Caco-2 (cell line): ENCODE measurements at regions of chr6 and their contacts with region 1.

Region 1: DNA sequence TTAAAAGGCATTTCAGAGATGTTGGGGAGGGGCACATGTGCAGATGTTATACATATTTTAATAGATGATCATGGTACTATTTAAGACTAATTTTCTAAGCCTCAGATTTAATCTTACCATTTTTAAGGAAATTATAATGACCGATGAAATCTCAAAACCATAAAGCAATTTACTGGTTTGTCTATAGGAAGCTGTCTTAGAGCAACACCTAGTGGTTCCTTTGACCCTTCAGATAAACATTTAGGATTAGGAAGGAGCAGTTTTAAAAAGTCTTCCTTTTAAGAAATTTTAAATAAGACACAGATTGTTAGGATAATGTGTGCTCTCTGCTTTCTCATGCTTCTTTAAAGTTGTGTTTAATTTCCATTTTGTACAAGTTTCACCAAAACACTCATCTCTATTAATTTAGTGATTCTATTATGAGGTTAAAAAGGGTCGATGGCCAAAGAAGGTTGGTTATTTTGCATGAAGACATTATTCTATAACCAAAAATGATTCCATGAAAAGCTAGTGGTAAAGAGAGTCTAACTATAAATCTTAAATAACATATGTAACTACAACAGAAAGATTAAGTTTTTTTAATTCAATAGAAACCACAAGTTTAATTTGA is 376.4 kb downstream of the HACE1 start:
- DNase-seq: no peak
- H3K4me3 ChIP-seq: no peak overlapping the region
- H3K4me3 Mint-ChIP-seq: no peak overlapping the region
- H3K27ac Mint-ChIP-seq: no peak overlapping the region
- H3K4me1 ChIP-seq: no peaks in the 10 kb centered on the region
- H3K4me1 Mint-ChIP-seq: no peaks in the 10 kb centered on the region
- H3K27me3 ChIP-seq: no peaks in the 10 kb centered on the region; the same call in 1 of the 2 replicates
- H3K27me3 Mint-ChIP-seq: no peaks in the 10 kb centered on the region
- CTCF ChIP-seq: peak; percentile 22 to 40

Region 2: GRCh38 chr6:104003803-104004516 is 479.4 kb before region 1 on chr6:
- CTCF ChIA-PET with region 1: no interaction called
- POLR2A ChIA-PET with region 1: no interaction called
- intact Hi-C with region 1: loop called (anchors 5 kb)
- DNase-seq: no peak
- H3K4me3 ChIP-seq: no peak overlapping the region
- H3K4me3 Mint-ChIP-seq: no peak overlapping the region
- H3K27ac Mint-ChIP-seq: no peak overlapping the region
- H3K4me1 ChIP-seq: no peaks in the 10 kb centered on the region
- H3K4me1 Mint-ChIP-seq: no peaks in the 10 kb centered on the region
- H3K27me3 ChIP-seq: no peaks in the 10 kb centered on the region
- H3K27me3 Mint-ChIP-seq: no peaks in the 10 kb centered on the region
- CTCF ChIP-seq: peak in 1 of 2 experiments; percentile 21

Region 3: DNA sequence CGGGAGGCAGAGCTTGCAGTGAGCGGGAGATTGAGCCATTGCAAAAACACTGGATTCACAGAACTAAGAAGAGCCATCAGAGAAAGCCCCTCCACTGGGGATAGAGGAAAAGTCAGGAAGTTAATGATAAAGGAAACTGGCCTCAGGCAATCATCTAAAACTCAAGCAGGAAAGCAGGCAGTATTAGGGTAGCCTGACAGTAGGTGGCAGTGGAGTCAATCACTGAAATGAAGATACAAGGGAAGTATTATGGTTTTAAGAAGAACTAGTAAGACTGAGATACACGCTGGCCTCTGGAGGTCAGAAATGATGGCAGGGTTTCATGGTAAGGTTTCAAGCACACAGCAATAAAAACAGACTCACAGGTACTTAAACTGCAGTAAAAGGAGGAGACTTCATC is 202.0 kb before region 1 on chr6:
- CTCF ChIA-PET with region 1: no interaction called
- POLR2A ChIA-PET with region 1: no interaction called
- intact Hi-C with region 1: loop called (anchors 5 kb)
- DNase-seq: peak in 1 of 2 experiments; percentile 7
- H3K4me3 ChIP-seq: no peak overlapping the region
- H3K4me3 Mint-ChIP-seq: no peak overlapping the region
- H3K27ac Mint-ChIP-seq: no peak overlapping the region
- H3K4me1 ChIP-seq: peaks cover 5% of the 10 kb centered on the region; the same call in 1 of the 2 replicates
- H3K4me1 Mint-ChIP-seq: no peaks in the 10 kb centered on the region
- H3K27me3 ChIP-seq: no peaks in the 10 kb centered on the region
- H3K27me3 Mint-ChIP-seq: no peaks in the 10 kb centered on the region
- CTCF ChIP-seq: no peak